ENCODE measurements at regions of chr1 and their contacts with region 1.

Region 1: GRCh38 chr1:157739229-157739901 is 37.6 kb downstream of the FCRL2 start:
- DNase-seq: no peak
- ATAC-seq: no peak

Region 2: DNA sequence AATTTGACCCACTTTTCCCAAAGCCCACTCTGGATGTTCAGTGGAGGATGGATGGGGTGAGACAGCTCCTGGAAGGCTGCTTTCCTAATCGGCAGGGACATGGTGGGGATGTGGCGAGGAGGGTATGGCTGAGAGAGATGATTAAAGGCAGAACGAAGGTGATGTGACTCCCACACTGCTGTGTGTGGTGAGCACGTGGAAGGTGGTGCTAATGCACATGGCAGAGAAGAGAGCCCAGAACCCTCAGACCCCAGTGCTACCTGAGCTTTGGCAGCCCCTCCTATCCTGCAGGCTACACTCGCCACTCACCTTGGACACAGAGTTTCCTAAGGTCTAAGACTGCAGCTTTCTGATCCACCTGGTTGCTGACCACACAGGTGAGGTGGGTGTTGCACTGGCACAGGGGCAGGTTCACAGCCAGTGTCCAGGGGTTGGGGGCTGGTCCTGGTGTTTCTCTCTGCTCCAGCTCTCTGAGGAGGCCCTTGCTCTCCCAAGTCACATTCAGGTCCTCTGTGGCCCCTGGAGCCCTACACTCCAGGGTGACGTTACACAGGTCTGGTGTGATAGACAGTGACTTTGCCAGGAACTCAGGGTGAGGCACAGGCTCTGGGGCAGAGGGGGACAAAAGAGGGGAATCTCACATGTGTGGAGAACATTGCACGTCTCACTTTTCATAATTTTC is 449.8 kb before region 1 on chr1:
- intact Hi-C with region 1: loop called (anchors 5 kb)
- DNase-seq: no peak
- ATAC-seq: no peak

Region 3: GRCh38 chr1:157704878-157705277 is 34.5 kb before region 1 on chr1:
- intact Hi-C with region 1: no loop called
- DNase-seq: no peak
- ATAC-seq: no peak

Region 4: GRCh38 chr1:157870490-157870889 is 131.1 kb after region 1 on chr1:
- intact Hi-C with region 1: no loop called
- DNase-seq: no peak
- ATAC-seq: no peak

Region 5: GRCh38 chr1:158830904-158831507 is 1091.6 kb after region 1 on chr1 and contains the start of gene MNDA:
- intact Hi-C with region 1: no loop called
- DNase-seq: no peak
- ATAC-seq: peak; percentile 76
- total RNA-seq, gene MNDA: 27.8 TPM

Region 6: DNA sequence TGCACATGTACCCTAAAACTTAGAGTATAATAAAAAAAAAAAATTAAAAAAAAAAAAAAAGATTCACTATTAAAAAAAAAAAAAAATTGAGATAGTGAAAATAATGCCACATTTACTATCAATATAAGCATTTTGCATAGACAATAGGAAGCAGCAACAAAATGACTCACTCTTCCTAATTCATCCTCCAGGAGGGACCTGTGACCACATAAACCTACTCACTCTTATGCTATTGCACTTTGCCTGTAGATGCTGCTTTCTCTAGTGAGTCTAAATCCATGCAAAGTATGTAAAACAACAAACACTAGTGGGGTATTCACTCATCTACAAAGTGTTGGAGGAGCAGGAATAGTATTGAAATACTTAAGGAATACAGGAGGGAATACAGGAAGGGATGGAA is 1793.6 kb after region 1 on chr1:
- intact Hi-C with region 1: no loop called
- DNase-seq: no peak
- ATAC-seq: no peak

Measured in sciatic nerve (tissue), 2 donors.